GM18951 (cell line): ENCODE measurements at regions of chr5 and their contacts with region 1.

Region 1: DNA sequence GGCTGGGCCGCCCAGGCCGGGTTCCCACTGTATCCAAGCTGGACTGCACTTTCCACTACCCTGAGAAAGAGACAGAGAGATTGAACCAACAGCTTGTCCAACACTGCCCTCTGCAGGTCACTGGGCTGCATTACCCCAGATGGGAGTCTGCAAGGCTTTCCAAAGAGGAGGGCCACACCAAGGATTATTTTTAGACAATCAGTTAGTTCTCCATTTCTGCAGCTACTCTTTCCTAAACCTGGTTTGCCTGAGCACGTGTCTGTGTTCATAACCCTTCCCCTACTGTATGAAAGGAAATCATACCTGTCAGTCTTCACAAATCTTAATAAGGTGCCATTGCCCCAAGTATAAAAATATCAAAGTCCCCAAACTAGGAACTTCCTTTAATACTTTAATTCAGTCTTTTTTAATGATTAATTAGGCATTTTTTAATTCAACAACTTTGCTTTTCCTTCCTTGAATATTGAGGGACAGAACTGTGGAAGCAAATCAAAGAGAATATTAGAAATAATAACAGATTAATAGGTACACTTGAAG is 13.4 kb upstream of the FGF1 start:
- POLR2A ChIP-seq: no peak

Region 2: GRCh38 chr5:142611154-142611553 is 88.1 kb before region 1 on chr5:
- in situ Hi-C with region 1: loop called (anchors 10 kb)
- POLR2A ChIP-seq: no peak